Activated B cell treated with CpG ODN at 0.5 μM for 24 hours (primary cell): ENCODE measurements at regions of chr20 and their contacts with region 1.

Region 1: DNA sequence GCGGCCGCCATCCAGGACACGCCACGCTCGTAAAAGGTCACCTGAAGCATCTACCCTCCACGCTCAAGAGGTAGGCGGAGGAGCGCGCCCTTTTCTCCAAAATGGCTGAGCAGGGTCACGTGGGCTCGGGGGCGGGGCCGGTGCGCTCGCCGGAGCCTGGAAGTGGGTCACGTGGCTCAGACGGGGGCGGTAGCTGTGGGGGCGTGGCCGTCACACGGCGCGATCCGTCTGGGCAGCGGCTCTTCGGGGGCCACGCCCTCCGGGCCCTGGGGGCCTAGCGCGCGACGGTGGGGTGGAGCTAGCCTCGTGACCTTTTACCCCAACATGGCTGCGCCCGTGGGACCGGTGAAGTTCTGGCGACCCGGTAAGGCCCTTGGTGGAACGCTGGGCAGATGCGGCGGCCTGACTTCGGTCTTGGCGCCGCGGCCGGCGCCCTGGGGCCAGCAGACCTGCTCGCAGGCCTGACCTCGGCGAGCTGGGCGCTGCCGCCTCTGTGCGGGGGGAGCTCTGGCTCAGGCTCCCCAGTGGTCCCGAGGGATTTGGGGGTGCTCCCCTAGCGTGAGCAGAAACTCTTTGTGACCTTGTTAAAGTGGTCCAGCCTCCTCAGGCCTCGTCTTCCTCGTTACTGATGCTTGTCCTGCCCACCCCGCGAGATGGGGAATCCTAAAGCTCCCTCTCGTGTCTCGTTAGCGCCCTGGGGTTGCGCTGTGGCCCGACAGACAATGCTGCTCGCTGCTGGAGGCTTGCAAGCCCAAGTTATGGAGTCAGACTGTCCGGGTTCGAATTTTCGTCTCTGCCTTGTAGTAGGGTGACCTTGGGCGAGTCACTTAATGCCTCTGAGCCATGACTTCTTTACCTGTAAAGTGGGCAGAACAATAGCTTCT is at the start of gene DHX35:
- DNase-seq: peak; percentile 99
- ATAC-seq: peak; percentile 96
- H3K4me3 Mint-ChIP-seq: peak within 1 kb of the TSS; percentile 95
- H3K27ac Mint-ChIP-seq: peak within 1 kb of the TSS; percentile 98
- H3K4me1 Mint-ChIP-seq: peaks cover 19% of the 10 kb centered on the region
- H3K27me3 Mint-ChIP-seq: no peaks in the 10 kb centered on the region
- CTCF ChIP-seq: no peak
- total RNA-seq, gene DHX35: 9.5 TPM in 2 replicates

Region 2: DNA sequence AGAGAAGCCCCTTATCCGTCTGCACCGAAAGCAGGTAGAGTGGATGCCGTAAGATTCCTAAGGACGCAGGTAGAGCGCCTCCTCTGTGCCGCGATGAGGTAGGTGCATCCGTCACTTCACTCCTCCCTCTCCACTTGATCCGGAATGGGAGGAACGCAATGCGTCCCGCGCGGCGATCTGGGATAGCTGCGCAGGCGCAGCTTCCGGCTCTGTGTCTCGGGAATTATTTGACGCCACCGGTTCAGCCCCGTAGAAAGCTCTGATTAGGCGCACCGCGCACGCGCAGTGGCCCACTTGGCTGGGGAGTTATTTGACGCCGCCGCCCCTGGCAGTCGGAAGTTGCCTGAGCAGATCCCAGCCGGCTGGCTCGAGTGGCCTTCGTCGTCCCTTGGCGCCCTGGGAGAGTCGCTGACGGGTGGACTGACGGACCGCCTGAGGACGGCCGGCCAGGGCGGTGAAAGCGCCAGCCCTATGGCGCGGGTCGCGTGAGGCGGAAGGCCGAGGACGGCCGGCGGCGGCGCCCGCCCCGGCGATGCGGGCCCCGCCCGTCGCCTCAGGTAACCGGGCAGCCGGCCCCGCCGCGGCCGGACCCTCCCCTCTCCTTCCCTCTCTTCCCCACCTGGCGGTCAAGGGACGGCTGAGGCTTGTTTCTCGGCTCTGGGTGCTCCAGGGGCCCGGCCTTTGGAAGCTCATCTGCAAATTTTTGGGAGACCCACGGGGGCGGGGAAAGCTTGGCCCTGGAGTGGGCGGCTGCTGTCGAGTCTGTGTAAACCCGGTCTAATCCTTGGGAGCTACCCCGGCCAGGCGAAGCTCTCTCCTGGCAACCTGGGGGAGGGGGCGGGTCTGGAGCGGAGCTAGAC is 489.5 kb before region 1 on chr20 and contains the start of gene RALGAPB:
- CTCF ChIA-PET with region 1: no interaction called
- POLR2A ChIA-PET with region 1: interaction called, 4 read pairs
- intact Hi-C with region 1: loop called (anchors 5 kb)
- DNase-seq: peak; percentile 95
- ATAC-seq: peak; percentile 88
- H3K4me3 Mint-ChIP-seq: peak within 1 kb of the TSS; percentile 91
- H3K27ac Mint-ChIP-seq: peak within 1 kb of the TSS; percentile 85
- H3K4me1 Mint-ChIP-seq: peaks cover 44% of the 10 kb centered on the region
- H3K27me3 Mint-ChIP-seq: no peaks in the 10 kb centered on the region
- CTCF ChIP-seq: no peak
- total RNA-seq, gene RALGAPB: 40.2 and 48.3 TPM in 2 replicates

Region 3: GRCh38 chr20:38730989-38731737 is 231.1 kb before region 1 on chr20:
- CTCF ChIA-PET with region 1: interaction called, 10 read pairs
- POLR2A ChIA-PET with region 1: interaction called, 3 read pairs
- intact Hi-C with region 1: no loop called
- DNase-seq: peak; percentile 68
- ATAC-seq: peak; percentile 76
- H3K4me3 Mint-ChIP-seq: peak overlapping the region; percentile 65
- H3K27ac Mint-ChIP-seq: no peak overlapping the region
- H3K4me1 Mint-ChIP-seq: peaks cover 52% of the 10 kb centered on the region
- H3K27me3 Mint-ChIP-seq: peaks cover 88% of the 10 kb centered on the region
- CTCF ChIP-seq: peak; percentile 77

Region 4: GRCh38 chr20:38764567-38765355 is 197.5 kb before region 1 on chr20:
- CTCF ChIA-PET with region 1: no interaction called
- POLR2A ChIA-PET with region 1: no interaction called
- intact Hi-C with region 1: no loop called
- DNase-seq: no peak
- ATAC-seq: no peak
- H3K4me3 Mint-ChIP-seq: no peak overlapping the region
- H3K27ac Mint-ChIP-seq: no peak overlapping the region
- H3K4me1 Mint-ChIP-seq: no peaks in the 10 kb centered on the region
- H3K27me3 Mint-ChIP-seq: no peaks in the 10 kb centered on the region
- CTCF ChIP-seq: no peak

Region 5: DNA sequence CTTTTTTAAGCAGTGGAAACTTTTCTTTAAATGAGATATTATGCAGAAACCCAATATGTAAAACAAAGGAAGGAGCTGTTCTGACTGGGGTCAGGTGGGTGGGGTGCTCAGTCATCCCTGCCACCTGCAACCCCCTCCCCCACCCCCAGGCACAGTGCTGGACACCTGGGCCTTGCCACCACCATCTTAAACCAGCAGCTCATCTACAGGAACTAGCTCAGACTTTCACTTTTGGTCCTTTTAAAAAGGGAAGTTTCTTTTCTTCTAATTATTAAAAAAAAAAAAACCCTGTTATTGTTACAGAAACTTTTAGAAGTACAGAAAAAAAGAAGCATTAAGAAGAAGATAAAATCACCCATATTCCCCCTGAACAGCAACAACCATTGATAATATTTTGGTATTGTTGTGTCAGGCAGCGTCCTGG is 119.7 kb before region 1 on chr20:
- CTCF ChIA-PET with region 1: no interaction called
- POLR2A ChIA-PET with region 1: interaction called, 11 read pairs
- intact Hi-C with region 1: loop called (anchors 2 kb)
- DNase-seq: peak; percentile 51
- ATAC-seq: peak; percentile 97
- H3K4me3 Mint-ChIP-seq: peak overlapping the region; percentile 75
- H3K27ac Mint-ChIP-seq: peak overlapping the region; percentile 97
- H3K4me1 Mint-ChIP-seq: peaks cover 93% of the 10 kb centered on the region
- H3K27me3 Mint-ChIP-seq: no peaks in the 10 kb centered on the region
- CTCF ChIP-seq: no peak

Region 6: GRCh38 chr20:38893565-38894090 is 68.7 kb before region 1 on chr20:
- CTCF ChIA-PET with region 1: interaction called, 15 read pairs
- POLR2A ChIA-PET with region 1: interaction called, 10 read pairs
- intact Hi-C with region 1: no loop called
- DNase-seq: peak; percentile 76
- ATAC-seq: peak; percentile 77
- H3K4me3 Mint-ChIP-seq: peak overlapping the region; percentile 45
- H3K27ac Mint-ChIP-seq: peak overlapping the region; percentile 86
- H3K4me1 Mint-ChIP-seq: peaks cover 64% of the 10 kb centered on the region
- H3K27me3 Mint-ChIP-seq: no peaks in the 10 kb centered on the region
- CTCF ChIP-seq: peak; percentile 78

Region 7: GRCh38 chr20:38985603-38986170 is 23.4 kb after region 1 on chr20:
- CTCF ChIA-PET with region 1: no interaction called
- POLR2A ChIA-PET with region 1: interaction called, 14 read pairs
- intact Hi-C with region 1: loop called (anchors 2 kb)
- DNase-seq: no peak
- ATAC-seq: no peak
- H3K4me3 Mint-ChIP-seq: no peak overlapping the region
- H3K27ac Mint-ChIP-seq: no peak overlapping the region
- H3K4me1 Mint-ChIP-seq: peaks cover 17% of the 10 kb centered on the region
- H3K27me3 Mint-ChIP-seq: no peaks in the 10 kb centered on the region
- CTCF ChIP-seq: no peak